Posterior vena cava (tissue), 2 donors: ENCODE measurements at regions of chr12 and their contacts with region 1.

Region 1: GRCh38 chr12:103771466-103771865 is 69.6 kb downstream of the NT5DC3 start:
- DNase-seq: no peak

Region 2: DNA sequence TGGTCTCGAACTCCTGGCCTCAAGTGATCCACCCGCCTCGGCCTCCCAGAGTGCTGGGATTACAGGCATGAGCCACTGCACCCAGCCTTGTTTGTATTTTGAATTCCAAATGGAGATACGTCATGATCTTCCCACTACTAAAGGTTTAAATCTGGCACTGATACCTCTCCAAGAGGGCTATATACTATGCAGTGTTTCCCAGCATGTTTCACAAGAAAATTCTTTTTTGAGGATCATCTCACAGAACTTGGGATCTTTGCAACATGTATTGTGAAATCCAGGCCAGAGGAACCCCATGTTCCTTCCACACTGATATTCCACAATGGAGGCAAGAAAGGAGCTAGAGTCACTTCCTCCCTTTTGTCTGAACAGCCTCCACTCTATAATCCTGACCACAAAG is 43.1 kb before region 1 on chr12:
- intact Hi-C with region 1: no loop called
- DNase-seq: no peak

Region 3: GRCh38 chr12:103814436-103814835 is 43.0 kb after region 1 on chr12:
- intact Hi-C with region 1: no loop called
- DNase-seq: no peak

Region 4: DNA sequence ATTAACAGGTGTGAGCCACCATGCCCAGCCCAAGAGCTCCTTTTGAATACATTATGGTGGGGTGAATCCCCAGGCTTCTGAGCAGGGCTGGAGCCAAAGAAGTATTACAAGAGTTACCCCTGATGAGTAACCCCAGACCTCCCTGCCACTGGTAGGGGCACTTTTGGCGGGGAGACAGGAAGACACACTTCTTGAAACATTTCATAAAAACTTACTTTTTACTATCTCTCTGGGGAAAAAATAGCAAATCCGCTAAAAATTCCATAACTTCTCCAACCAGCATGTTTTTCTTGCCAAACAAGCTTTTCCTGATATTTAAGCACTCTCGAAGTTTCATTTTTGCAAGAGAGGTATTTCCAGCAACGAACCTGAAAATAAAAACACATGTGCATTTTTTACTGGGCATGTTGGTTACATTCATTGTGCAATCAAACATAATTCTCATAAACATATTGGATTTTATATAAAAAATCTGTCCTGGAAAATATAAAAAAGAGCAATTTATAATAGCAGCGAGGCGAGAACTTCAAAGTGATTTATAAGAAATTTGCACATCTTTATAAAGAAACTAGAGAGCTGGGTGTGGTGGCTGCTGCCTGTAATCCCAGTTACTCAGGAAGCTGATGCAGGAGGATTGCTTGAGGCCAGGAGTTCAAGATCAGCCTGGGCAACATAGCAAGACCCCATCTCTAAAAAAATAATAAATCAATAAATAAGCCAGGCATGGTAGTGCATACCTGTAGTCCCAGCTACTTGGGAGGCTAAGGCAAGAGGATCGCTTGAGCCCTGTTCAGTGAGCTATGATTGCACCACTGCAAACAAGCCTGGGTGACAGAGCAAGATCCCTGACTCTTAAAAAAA is 89.7 kb after region 1 on chr12:
- intact Hi-C with region 1: loop called in 1 of 2 experiments (anchors 10 kb)
- DNase-seq: no peak

Region 5: DNA sequence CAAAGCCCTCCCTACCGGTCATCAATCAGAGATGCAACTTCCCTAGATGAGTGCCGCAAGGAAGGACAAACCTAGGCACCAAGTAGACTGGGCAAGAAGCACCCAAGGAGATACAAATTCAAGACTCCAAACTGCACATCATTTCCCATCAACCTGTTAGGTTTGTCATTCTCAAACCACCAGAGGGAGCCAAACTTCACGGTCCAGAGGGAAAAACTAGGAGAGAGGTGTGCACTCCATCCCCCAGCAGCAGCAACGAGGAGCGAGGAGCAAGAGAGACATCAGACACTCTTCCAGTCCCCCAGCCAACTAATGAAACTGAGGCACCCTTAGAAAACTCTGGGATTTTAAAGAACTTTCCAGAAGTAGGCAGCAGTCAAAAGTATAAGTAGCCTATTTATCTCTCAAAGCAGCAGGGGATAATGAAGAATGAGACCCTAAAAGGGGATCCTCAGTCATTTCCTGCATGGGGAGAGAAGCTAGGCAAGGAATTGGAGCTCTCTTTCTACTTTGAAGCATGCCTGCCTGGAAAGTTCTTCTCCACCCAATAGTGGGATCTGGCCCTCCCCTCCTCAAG is 106.6 kb after region 1 on chr12:
- intact Hi-C with region 1: loop called in 1 of 2 experiments (anchors 5 kb)
- DNase-seq: no peak

Region 6: DNA sequence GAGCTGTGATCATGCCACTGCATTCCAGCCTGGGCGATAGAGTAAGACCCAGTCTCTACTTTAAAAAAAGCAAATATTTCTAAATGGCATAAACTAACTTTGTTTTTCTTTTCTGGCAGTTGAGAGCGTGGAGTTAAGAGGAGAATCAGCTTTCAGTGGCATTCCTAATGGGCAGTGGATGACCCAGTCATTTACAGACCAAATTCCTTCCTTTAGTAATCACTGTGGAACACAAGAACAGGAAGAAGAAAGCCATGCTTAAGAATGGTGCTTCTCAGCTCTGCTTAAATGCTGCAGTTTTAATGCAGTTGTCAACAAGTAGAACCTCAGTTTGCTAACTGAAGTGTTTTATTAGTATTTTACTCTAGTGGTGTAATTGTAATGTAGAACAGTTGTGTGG is 215.4 kb after region 1 on chr12:
- intact Hi-C with region 1: no loop called
- DNase-seq: no peak